Right ventricle myocardium superior (tissue), 1 donor: ENCODE measurements at regions of chr6 and their contacts with region 1.

Region 1: DNA sequence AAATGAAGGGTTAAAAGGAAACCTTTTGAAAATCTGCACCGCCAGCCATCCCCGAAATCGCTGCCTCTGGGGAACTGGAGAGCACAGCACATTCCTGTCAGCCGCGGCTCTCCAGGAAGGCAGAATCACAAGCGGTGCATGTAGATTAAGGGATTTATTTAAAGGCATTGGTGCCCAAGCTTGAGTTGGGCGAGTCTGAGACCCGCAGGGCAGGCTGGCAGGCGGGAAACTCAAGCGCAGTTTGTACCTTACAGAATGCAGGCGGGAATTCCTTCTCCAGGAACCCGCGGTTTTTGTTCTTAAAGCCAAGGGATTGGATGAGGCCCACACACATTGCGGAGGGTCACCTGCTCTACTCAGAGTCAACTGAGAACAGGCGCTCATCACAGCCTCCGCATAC is 10.8 kb downstream of the GPR31 start:
- DNase-seq: no peak
- ATAC-seq: no peak

Region 2: DNA sequence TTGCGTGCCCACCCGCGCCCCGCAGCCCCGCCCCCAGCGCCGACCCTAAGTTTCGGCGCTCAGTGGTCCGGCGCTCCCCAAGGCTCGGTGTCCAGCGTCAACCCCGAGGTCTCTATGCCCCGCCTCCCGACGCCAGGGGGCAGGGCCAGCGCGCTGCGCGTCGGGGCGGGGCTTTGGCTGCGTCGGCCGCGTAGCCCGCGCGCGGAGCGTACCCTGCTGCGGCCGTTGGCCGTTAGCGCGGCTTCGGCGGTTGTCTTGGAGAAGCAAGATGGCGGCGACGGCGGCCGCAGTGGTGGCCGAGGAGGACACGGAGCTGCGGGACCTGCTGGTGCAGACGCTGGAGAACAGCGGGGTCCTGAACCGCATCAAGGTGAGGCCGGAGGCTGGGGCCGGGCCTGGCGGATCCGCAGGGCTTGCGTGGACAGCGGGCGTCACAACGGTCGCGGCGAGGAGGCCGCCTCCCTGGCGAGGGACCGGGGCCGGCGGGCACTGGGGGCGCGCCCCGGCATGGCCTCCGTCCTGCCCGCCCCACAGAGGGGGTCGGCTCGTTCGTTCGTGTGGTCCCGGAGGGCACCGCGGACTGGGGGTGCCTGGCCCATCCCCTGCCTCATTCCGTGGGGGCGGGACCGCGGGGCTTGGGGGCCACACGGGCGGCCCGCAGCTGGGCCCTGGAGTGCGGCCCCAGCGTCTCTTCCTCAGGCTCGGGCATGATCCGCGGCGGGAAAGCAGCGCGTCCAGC is 147.7 kb before region 1 on chr6 and contains the start of gene CEP43:
- intact Hi-C with region 1: loop called (anchors 5 kb)
- DNase-seq: peak; percentile 96
- ATAC-seq: peak; percentile 99
- total RNA-seq, gene CEP43: 13.2 TPM

Region 3: GRCh38 chr6:167255918-167256553 is 109.1 kb after region 1 on chr6:
- intact Hi-C with region 1: no loop called
- DNase-seq: no peak
- ATAC-seq: no peak